HepG2 (cell line): ENCODE measurements at regions of chr3 and their contacts with region 1.

Region 1: GRCh38 chr3:115790759-115791158 is 167.4 kb downstream of the GAP43 start:
- DNase-seq: peak; percentile 84
- ATAC-seq: peak; percentile 72
- H3K4me3 ChIP-seq: peak overlapping the region; percentile 69 to 80 (median 72)
- H3K27ac ChIP-seq: peak overlapping the region; percentile 86
- H3K4me1 ChIP-seq: peaks cover 58% of the 10 kb centered on the region
- H3K27me3 ChIP-seq: no peaks in the 10 kb centered on the region; a peak in 1 of 5 replicates
- CTCF ChIP-seq: no peak
- EP300 ChIP-seq: peak in 1 of 2 experiments; percentile 43; a peak in 1 of 4 replicates
- POLR2A ChIP-seq: 0 out of 4 replicates have a peak, but pooled peaks of 1 of the 2 experiments have one; percentile 1
- RAD21 ChIP-seq: no peak

Region 2: GRCh38 chr3:114498779-114499370 is 1291.9 kb before region 1 on chr3:
- CTCF ChIA-PET with region 1: no interaction called
- POLR2A ChIA-PET with region 1: no interaction called
- in situ Hi-C with region 1: no loop called
- intact Hi-C with region 1: loop called (anchors 5 kb)
- DNase-seq: peak; percentile 13
- ATAC-seq: no peak
- H3K4me3 ChIP-seq: no peak overlapping the region
- H3K27ac ChIP-seq: no peak overlapping the region
- H3K4me1 ChIP-seq: peaks cover 22% of the 10 kb centered on the region
- H3K27me3 ChIP-seq: no peaks in the 10 kb centered on the region
- CTCF ChIP-seq: no peak
- EP300 ChIP-seq: no peak
- POLR2A ChIP-seq: no peak
- RAD21 ChIP-seq: no peak

Region 3: DNA sequence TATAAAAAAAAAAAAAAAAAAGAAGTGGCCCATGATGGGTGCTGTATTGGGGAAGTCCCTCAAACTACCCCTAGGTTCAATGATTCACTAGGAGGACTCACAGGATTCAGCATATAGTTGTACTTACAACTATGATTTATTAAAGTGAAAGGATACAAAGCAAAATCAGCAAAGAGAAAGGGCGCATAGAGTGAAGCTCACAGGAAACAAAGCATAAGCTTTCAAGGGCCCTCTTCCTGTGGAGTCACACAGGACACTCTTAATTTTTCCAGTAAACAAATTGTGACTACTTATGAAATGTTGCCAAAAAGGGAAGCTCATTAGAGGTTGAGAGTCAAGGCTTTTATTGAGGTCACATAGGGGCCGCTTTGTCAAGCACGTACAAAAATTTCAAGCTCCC is 321.1 kb before region 1 on chr3:
- CTCF ChIA-PET with region 1: no interaction called
- POLR2A ChIA-PET with region 1: no interaction called
- in situ Hi-C with region 1: no loop called
- intact Hi-C with region 1: no loop called
- DNase-seq: no peak
- ATAC-seq: no peak
- H3K4me3 ChIP-seq: no peak overlapping the region
- H3K27ac ChIP-seq: no peak overlapping the region
- H3K4me1 ChIP-seq: no peaks in the 10 kb centered on the region
- H3K27me3 ChIP-seq: no peaks in the 10 kb centered on the region
- CTCF ChIP-seq: no peak
- EP300 ChIP-seq: no peak
- POLR2A ChIP-seq: no peak
- RAD21 ChIP-seq: no peak

Region 4: GRCh38 chr3:115843206-115843605 is 52.4 kb after region 1 on chr3:
- CTCF ChIA-PET with region 1: no interaction called
- POLR2A ChIA-PET with region 1: interaction called, 15 read pairs
- in situ Hi-C with region 1: no loop called
- intact Hi-C with region 1: no loop called
- DNase-seq: peak; percentile 95
- ATAC-seq: peak; percentile 99
- H3K4me3 ChIP-seq: no peak overlapping the region; a peak in 1 of 6 replicates
- H3K27ac ChIP-seq: peak overlapping the region; percentile 74
- H3K4me1 ChIP-seq: peaks cover 50% of the 10 kb centered on the region
- H3K27me3 ChIP-seq: no peaks in the 10 kb centered on the region
- CTCF ChIP-seq: no peak
- EP300 ChIP-seq: peak; percentile 12 to 84; a peak in 3 of 4 replicates
- POLR2A ChIP-seq: no peak
- RAD21 ChIP-seq: no peak